Dorsolateral prefrontal cortex (tissue), 120 donors: ENCODE measurements at regions of chr6 and their contacts with region 1.

Region 1: GRCh38 chr6:89371849-89372505 is 19.5 kb upstream of the UBE2J1 start:
- DNase-seq: peak; percentile 72 to 86 (median 81)
- H3K4me3 ChIP-seq: peak overlapping the region in 4 of 59 donors; percentile 6 to 15 (median 10)
- H3K27ac ChIP-seq: peak overlapping the region in 49 of 59 donors; percentile 17 to 89 (median 67)
- H3K27me3 ChIP-seq: no peaks in the 10 kb centered on the region
- CTCF ChIP-seq: peak; percentile 79 to 99 (median 96)

Region 2: DNA sequence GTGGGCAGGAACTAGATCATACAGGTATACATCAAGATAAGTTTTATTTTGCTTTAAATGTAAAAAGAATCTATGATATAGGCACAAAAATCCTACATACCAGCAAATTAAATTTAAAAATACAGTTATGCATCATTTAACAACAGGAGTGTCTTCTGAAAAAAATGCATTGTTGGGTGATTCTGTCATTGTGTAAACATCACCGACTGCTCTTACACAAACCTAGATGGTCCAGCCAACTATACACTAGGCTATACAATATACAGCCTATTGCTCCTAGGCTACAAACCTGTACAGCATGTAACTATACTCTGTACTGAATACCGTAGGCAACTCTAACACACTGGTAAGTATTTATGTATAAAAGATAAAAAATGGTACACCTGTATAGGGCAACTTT is 548.0 kb before region 1 on chr6:
- intact Hi-C with region 1: no loop called
- DNase-seq: no peak
- H3K4me3 ChIP-seq: no peak overlapping the region
- H3K27ac ChIP-seq: no peak overlapping the region
- H3K27me3 ChIP-seq: no peaks in the 10 kb centered on the region
- CTCF ChIP-seq: no peak

Region 3: GRCh38 chr6:88989215-88989614 is 382.8 kb before region 1 on chr6:
- intact Hi-C with region 1: loop called in 1 of 2 experiments (anchors 5 kb)
- DNase-seq: no peak
- H3K4me3 ChIP-seq: no peak overlapping the region
- H3K27ac ChIP-seq: no peak overlapping the region
- H3K27me3 ChIP-seq: no peaks in the 10 kb centered on the region
- CTCF ChIP-seq: no peak

Region 4: GRCh38 chr6:89087881-89088280 is 284.1 kb before region 1 on chr6:
- intact Hi-C with region 1: no loop called
- DNase-seq: no peak
- H3K4me3 ChIP-seq: no peak overlapping the region
- H3K27ac ChIP-seq: peak overlapping the region in 10 of 59 donors; percentile 3 to 63 (median 20)
- H3K27me3 ChIP-seq: no peaks in the 10 kb centered on the region
- CTCF ChIP-seq: no peak

Region 5: GRCh38 chr6:89311853-89312531 is 60.0 kb before region 1 on chr6:
- intact Hi-C with region 1: loop called in 1 of 2 experiments (anchors 5 kb)
- DNase-seq: peak in 6 of 10 donors; percentile 20 to 66 (median 50)
- H3K4me3 ChIP-seq: peak overlapping the region in 14 of 59 donors; percentile 0 to 35 (median 12)
- H3K27ac ChIP-seq: peak overlapping the region in 39 of 59 donors; percentile 9 to 78 (median 42)
- H3K27me3 ChIP-seq: no peaks in the 10 kb centered on the region
- CTCF ChIP-seq: peak in 48 of 56 donors; percentile 26 to 74 (median 50)

Region 6: DNA sequence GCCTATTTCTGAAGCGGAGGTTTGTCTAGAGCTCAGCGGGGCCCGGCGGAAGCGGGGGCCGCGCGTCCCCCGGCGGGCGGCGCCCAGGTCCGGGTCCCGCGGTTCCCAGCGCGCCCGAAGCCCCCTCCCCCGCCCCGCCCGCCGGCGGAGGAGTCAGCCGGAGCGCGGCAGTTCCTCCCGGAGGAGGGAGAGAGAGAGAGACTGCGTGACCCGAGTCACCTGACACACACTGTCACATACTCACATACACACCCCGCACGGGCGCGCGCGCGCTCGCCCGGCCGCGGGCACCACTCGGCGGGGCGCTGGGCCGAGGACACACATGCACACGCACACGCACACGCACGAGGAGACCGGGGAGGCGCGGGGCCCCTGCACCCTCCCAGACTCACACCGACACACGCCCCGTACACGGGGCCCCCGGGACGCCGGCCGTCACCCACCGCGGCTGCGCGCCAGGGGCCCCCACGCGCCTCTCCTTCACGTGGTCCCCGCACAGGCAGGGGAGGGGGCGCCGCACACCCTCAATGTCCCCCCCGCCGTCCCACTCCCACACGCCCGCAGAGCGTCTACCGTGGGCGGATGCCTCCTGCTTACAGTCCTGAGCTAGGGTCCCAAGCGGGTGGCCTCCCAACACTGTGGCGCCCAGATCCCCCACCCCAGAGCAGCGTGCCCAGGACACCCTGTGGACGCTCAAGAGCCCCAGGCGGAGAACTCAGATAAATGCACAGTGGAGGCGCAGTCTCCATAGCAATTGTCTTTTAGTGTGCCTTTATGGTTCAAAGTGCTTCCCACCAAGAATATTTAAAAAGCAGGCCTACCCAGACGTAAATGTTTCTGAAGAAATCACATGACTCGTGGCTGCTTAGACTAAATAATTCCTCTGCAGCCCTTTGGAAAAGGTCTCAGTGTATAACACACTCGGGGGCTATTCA is 40.4 kb after region 1 on chr6 and contains the start of gene RRAGD:
- intact Hi-C with region 1: loop called (anchors 2 to 5 kb)
- DNase-seq: peak; percentile 63 to 92 (median 86)
- H3K4me3 ChIP-seq: peak within 1 kb of the TSS; percentile 65 to 98 (median 88)
- H3K27ac ChIP-seq: peak within 1 kb of the TSS; percentile 35 to 98 (median 91)
- H3K27me3 ChIP-seq: no peaks in the 10 kb centered on the region
- CTCF ChIP-seq: peak in 16 of 56 donors; percentile 3 to 33 (median 19)
- total RNA-seq, gene RRAGD: 31.7 to 65.1 (median 45.2) TPM

Region 7: GRCh38 chr6:89432875-89433251 is 60.9 kb after region 1 on chr6 and contains the start of gene ANKRD6:
- intact Hi-C with region 1: loop called in 1 of 2 experiments (anchors 5 kb)
- DNase-seq: peak in 9 of 10 donors; percentile 36 to 83 (median 65)
- H3K4me3 ChIP-seq: peak within 1 kb of the TSS; percentile 54 to 91 (median 78)
- H3K27ac ChIP-seq: peak within 1 kb of the TSS in 8 of 59 donors; percentile 2 to 82 (median 48)
- H3K27me3 ChIP-seq: no peaks in the 10 kb centered on the region
- CTCF ChIP-seq: peak; percentile 48 to 96 (median 80)
- total RNA-seq, gene ANKRD6: 14.2 to 73.6 (median 37.4) TPM

Region 8: GRCh38 chr6:89443658-89444057 is 71.7 kb after region 1 on chr6:
- intact Hi-C with region 1: no loop called
- DNase-seq: no peak
- H3K4me3 ChIP-seq: no peak overlapping the region
- H3K27ac ChIP-seq: no peak overlapping the region
- H3K27me3 ChIP-seq: no peaks in the 10 kb centered on the region
- CTCF ChIP-seq: no peak

Region 9: GRCh38 chr6:89597988-89598692 is 226.2 kb after region 1 on chr6:
- intact Hi-C with region 1: loop called in 1 of 2 experiments (anchors 5 kb)
- DNase-seq: no peak
- H3K4me3 ChIP-seq: no peak overlapping the region
- H3K27ac ChIP-seq: no peak overlapping the region
- H3K27me3 ChIP-seq: no peaks in the 10 kb centered on the region
- CTCF ChIP-seq: peak in 30 of 56 donors; percentile 13 to 54 (median 32)

Region 10: GRCh38 chr6:89638320-89639195 is 266.6 kb after region 1 on chr6 and contains the start of gene LYRM2:
- intact Hi-C with region 1: loop called in 1 of 2 experiments (anchors 10 kb)
- DNase-seq: peak; percentile 92 to 97 (median 95)
- H3K4me3 ChIP-seq: peak within 1 kb of the TSS; percentile 56 to 92 (median 79)
- H3K27ac ChIP-seq: peak within 1 kb of the TSS; percentile 73 to 99 (median 97)
- H3K27me3 ChIP-seq: no peaks in the 10 kb centered on the region
- CTCF ChIP-seq: peak in 44 of 56 donors; percentile 15 to 63 (median 37)
- total RNA-seq, gene LYRM2: 30.1 to 60.1 (median 43.4) TPM

Region 11: DNA sequence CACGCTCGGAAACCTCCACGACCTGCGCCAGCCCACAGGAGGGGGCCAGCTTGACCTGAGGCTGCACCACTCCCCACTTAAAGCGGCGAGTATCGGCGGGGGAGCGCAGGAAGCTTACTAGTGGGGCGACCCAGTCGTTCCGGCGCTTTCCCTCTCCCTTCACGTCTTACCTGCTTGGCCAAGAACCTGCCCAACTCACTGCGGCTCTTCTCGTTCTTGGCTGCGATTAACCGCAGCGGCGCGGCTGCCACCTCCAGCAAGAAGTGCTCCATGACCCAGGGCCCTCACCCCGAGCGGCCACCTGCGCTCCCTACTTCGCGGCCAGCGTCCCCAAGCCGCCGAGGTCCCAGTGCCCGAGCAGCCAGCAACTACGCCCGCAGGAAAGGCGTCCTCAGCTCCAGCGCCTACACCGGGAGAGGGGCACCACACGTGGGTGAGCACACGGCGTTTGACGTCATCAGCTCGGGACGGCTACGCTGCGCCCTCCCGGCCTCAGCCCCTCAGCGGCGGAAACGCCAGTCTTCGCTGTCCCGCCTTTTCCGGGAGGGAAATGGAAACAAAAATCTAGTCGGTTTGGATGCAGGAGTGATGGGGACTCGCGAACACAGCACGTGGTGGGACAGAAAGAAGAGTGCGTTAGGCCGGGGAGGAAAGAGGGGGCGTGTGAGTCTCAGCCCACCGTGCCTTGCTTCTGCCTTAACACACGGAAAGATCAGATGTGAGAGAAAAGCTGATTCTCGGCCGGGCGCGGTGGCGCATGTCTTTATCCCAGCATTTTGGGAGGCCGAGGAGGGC is 447.6 kb after region 1 on chr6 and contains the start of gene MDN1:
- intact Hi-C with region 1: no loop called
- DNase-seq: peak; percentile 83 to 95 (median 92)
- H3K4me3 ChIP-seq: peak within 1 kb of the TSS; percentile 62 to 99 (median 89)
- H3K27ac ChIP-seq: peak within 1 kb of the TSS in 58 of 59 donors; percentile 10 to 92 (median 76)
- H3K27me3 ChIP-seq: no peaks in the 10 kb centered on the region
- CTCF ChIP-seq: peak in 17 of 56 donors; percentile 4 to 47 (median 23)
- total RNA-seq, gene MDN1: 51.0 to 84.3 (median 67.6) TPM